Gastrocnemius medialis (tissue), 4 donors: ENCODE measurements at regions of chr14 and their contacts with region 1.

Region 1: DNA sequence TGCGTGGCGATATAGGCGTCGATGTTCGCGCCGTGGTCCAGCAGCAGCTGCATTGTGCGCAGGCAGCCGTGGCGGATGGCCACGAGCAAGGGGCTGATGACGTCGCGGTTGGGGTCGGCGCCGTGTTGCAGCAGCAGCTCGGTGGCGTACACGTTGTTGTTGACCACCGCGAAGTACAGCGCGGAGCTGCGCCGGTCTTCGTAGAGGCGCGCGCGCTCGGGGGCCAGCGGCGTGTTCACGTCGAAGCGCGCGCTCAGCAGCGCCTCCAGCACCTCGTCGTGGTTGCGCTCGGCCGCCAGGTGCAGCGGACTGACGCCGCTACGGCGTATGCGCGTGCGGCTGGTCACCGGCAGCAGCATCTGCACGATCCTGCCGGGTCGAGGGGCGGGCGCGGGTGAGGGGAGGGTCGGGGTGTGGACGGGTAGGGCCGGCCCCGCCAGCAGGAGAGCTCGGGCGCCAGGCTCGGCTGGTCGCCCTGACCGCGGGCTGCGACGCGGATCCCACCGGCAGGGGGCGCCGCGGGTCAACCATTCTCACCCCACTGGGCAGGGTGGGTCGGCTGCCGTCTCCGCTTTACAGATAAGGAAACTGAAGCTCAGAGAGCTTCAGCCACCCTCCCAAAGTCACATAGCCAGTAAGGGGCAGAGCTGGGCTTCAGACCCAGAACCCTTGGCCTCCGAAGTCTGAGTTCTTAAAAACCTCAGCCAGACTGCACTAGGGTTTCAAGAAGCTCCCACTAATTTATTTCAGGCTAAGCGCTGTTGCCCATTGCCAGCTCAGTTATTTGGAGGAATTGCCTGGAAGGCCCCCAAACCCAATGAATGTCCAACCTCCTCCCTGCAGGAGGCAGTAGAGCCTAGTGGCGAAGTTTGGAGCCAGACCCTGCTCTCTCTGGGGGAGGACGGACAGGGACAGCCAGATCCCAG is 12.4 kb downstream of the FAM181A start:
- DNase-seq: peak; percentile 62 to 78
- ATAC-seq: peak; percentile 14 to 16
- H3K4me3 ChIP-seq: peak overlapping the region in 1 of 4 donors; percentile 24
- H3K27ac ChIP-seq: peak overlapping the region; percentile 97 to 100 (median 98)
- H3K4me1 ChIP-seq: peaks cover 48 to 54% of the 10 kb centered on the region in 2 donors
- H3K27me3 ChIP-seq: no peaks in the 10 kb centered on the region
- CTCF ChIP-seq: peak; percentile 63 to 96 (median 82)
- POLR2A ChIP-seq: peak in 1 of 2 donors; percentile 15

Region 2: DNA sequence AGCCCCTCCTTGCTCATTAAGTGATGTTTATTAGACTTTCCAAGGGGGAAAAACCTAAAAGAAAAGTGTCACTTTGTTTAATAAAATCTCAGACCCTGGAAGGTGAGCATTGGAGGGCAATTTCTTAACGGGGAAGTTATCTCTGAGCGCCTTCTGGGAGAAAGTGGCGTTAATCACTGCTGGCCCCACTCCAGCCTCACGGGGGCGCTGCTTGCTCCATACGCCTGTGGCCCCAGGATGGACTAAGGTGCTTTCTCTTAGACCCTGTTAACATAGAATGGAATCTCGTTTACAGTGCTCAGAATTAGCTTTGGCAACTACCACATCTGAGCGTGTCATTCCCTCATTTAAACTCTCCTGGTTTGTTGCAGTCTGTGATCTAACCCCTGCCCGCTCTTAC is 134.9 kb before region 1 on chr14:
- in situ Hi-C with region 1: no loop called
- intact Hi-C with region 1: no loop called
- DNase-seq: no peak
- ATAC-seq: no peak
- H3K4me3 ChIP-seq: no peak overlapping the region
- H3K27ac ChIP-seq: no peak overlapping the region
- H3K4me1 ChIP-seq: no peaks in the 10 kb centered on the region
- H3K27me3 ChIP-seq: peaks cover 0 to under 1% (median under 1%) of the 10 kb centered on the region in 3 donors
- CTCF ChIP-seq: no peak
- POLR2A ChIP-seq: no peak

Region 3: GRCh38 chr14:93959239-93960107 is 19.9 kb after region 1 on chr14:
- in situ Hi-C with region 1: no loop called
- intact Hi-C with region 1: loop called (anchors 2 kb)
- DNase-seq: peak; percentile 93 to 96
- ATAC-seq: peak; percentile 55 to 56
- H3K4me3 ChIP-seq: no peak overlapping the region
- H3K27ac ChIP-seq: peak overlapping the region; percentile 97 to 100 (median 98)
- H3K4me1 ChIP-seq: peaks cover 92 to 97% of the 10 kb centered on the region in 2 donors
- H3K27me3 ChIP-seq: no peaks in the 10 kb centered on the region
- CTCF ChIP-seq: no peak
- POLR2A ChIP-seq: peak; percentile 50 to 82

Region 4: DNA sequence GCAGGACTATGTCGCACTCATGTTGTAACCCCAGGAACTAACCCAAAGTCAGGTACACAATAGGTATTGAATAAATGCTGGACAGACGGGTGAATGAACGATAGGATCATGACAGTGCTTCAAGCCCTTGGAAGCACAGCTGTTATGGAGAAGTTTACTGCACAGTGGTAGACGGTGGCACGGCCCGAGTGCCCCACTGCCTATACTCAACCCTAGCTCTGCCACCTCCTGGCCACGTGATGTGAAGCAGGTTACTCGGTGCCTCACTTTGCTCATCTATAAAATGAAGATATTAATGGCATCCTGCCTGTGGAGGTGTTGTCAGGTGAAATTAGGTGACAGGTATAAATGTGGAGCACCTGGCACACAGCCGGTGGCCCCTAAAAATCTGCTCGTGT is 31.0 kb after region 1 on chr14:
- in situ Hi-C with region 1: no loop called
- intact Hi-C with region 1: loop called (anchors 2 kb)
- DNase-seq: peak in 1 of 2 donors; percentile 69
- ATAC-seq: no peak
- H3K4me3 ChIP-seq: peak overlapping the region; percentile 31 to 80 (median 67)
- H3K27ac ChIP-seq: peak overlapping the region; percentile 97 to 100 (median 98)
- H3K4me1 ChIP-seq: peaks cover 66 to 75% of the 10 kb centered on the region in 2 donors
- H3K27me3 ChIP-seq: no peaks in the 10 kb centered on the region
- CTCF ChIP-seq: peak in 3 of 5 experiments; percentile 32 to 64 (median 36)
- POLR2A ChIP-seq: no peak

Region 5: GRCh38 chr14:93994919-93995682 is 55.5 kb after region 1 on chr14:
- in situ Hi-C with region 1: loop called (anchors 5 to 10 kb)
- intact Hi-C with region 1: no loop called
- DNase-seq: peak; percentile 88 to 94
- ATAC-seq: peak; percentile 83 to 85
- H3K4me3 ChIP-seq: peak overlapping the region in 3 of 4 donors; percentile 1 to 28 (median 15)
- H3K27ac ChIP-seq: peak overlapping the region; percentile 97 to 100 (median 97)
- H3K4me1 ChIP-seq: peaks cover 49 to 50% of the 10 kb centered on the region in 2 donors
- H3K27me3 ChIP-seq: no peaks in the 10 kb centered on the region
- CTCF ChIP-seq: no peak
- POLR2A ChIP-seq: peak; percentile 54 to 56

Region 6: GRCh38 chr14:94001501-94002396 is 62.2 kb after region 1 on chr14:
- in situ Hi-C with region 1: loop called (anchors 5 to 10 kb)
- intact Hi-C with region 1: loop called (anchors 1 kb)
- DNase-seq: peak; percentile 52 to 76
- ATAC-seq: peak; percentile 66 to 76
- H3K4me3 ChIP-seq: no peak overlapping the region
- H3K27ac ChIP-seq: peak overlapping the region in 2 of 4 donors; percentile 2 to 56
- H3K4me1 ChIP-seq: peaks cover 29 to 33% of the 10 kb centered on the region in 2 donors
- H3K27me3 ChIP-seq: no peaks in the 10 kb centered on the region
- CTCF ChIP-seq: peak; percentile 89 to 97 (median 96)
- POLR2A ChIP-seq: no peak

Region 7: GRCh38 chr14:94173885-94174603 is 234.5 kb after region 1 on chr14 and contains the start of gene PPP4R4:
- in situ Hi-C with region 1: no loop called
- intact Hi-C with region 1: loop called (anchors 5 kb)
- DNase-seq: peak; percentile 40 to 61
- ATAC-seq: peak; percentile 81 to 89
- H3K4me3 ChIP-seq: peak within 1 kb of the TSS; percentile 59 to 69 (median 64)
- H3K27ac ChIP-seq: peak within 1 kb of the TSS; percentile 53 to 75 (median 68)
- H3K4me1 ChIP-seq: peaks cover 13% of the 10 kb centered on the region in 2 donors
- H3K27me3 ChIP-seq: peaks cover 24 to 36% (median 34%) of the 10 kb centered on the region in 3 donors
- CTCF ChIP-seq: no peak
- POLR2A ChIP-seq: no peak
- total RNA-seq, gene PPP4R4: 0.13 TPM in 1 of 4 donors, not detected in the others